Activated CD4-positive, alpha-beta memory T cell treated with anti-CD3 and anti-CD28 coated beads, Interleukin-2, amount 10 ng/mL, durations not matched to agents 7 days and 5 days (primary cell): ENCODE measurements at regions of chr1 and their contacts with region 1.

Region 1: DNA sequence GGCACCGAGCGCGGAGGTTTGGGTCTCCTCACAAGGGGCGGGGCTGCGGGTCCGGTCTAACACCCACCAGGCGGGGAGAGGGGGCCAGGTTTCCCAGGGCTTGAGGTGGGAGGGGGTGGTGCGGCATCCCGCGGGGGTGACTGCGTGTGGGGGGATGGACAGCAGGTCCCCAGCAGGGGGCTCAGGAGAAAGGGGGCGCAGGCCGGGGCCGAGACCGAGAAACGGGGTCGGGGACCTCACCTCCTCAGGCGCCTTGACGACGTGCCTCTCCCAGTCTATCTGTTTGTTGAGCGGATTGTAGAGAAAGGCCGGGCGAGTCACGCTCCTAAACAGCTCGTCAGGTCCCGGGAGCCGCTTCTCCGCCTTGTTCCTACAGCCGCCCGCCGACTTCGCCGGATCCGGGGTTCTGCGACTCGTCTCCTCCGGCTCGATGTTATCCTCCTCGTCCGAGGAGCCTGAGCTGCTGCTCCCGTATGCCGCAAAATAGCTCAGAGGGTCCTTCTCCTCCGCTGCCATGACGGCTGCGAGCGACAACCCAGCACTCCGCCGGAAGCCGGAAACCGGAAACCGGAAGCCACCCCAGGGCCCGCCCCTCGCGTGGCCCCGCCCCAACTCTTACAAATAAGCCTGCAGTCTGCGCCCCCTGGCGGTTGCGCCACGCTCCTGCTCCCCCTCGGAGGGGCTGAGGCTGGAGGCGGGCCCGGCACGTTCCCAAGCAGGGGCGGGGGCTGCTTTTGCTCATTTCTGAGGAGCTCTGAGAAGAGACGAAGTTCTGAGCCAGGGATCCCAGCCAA is at the start of gene C1orf52:
- DNase-seq: peak; percentile 95
- H3K4me3 Mint-ChIP-seq: peak within 1 kb of the TSS; percentile 90
- H3K27ac Mint-ChIP-seq: peak within 1 kb of the TSS; percentile 90
- H3K4me1 Mint-ChIP-seq: peaks cover 31% of the 10 kb centered on the region
- H3K27me3 Mint-ChIP-seq: no peaks in the 10 kb centered on the region
- total RNA-seq, gene C1orf52: 21.4 to 22.6 TPM

Region 2: DNA sequence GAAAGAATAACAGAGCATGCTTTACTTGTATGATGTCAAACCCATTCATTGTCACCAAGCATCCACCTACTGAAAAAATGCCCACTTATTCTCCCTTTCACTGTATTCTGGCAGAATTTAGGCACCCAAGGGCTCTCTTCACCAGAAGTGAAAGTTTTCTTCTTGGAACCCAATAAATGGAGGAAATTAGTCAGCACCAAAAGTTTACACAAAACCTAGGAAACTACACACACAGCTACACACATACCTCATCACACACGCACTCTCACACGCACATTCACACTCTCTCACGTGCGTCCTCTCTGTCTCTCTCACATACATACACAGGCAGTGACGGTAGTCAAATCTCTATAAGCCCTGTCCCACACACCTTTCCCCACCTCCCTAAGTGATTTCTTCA is 300.0 kb before region 1 on chr1:
- CTCF ChIA-PET with region 1: interaction called, 15 read pairs
- POLR2A ChIA-PET with region 1: no interaction called
- DNase-seq: peak; percentile 59
- H3K4me3 Mint-ChIP-seq: no peak overlapping the region
- H3K27ac Mint-ChIP-seq: no peak overlapping the region
- H3K4me1 Mint-ChIP-seq: peaks cover 23% of the 10 kb centered on the region
- H3K27me3 Mint-ChIP-seq: peaks cover 5% of the 10 kb centered on the region

Region 3: DNA sequence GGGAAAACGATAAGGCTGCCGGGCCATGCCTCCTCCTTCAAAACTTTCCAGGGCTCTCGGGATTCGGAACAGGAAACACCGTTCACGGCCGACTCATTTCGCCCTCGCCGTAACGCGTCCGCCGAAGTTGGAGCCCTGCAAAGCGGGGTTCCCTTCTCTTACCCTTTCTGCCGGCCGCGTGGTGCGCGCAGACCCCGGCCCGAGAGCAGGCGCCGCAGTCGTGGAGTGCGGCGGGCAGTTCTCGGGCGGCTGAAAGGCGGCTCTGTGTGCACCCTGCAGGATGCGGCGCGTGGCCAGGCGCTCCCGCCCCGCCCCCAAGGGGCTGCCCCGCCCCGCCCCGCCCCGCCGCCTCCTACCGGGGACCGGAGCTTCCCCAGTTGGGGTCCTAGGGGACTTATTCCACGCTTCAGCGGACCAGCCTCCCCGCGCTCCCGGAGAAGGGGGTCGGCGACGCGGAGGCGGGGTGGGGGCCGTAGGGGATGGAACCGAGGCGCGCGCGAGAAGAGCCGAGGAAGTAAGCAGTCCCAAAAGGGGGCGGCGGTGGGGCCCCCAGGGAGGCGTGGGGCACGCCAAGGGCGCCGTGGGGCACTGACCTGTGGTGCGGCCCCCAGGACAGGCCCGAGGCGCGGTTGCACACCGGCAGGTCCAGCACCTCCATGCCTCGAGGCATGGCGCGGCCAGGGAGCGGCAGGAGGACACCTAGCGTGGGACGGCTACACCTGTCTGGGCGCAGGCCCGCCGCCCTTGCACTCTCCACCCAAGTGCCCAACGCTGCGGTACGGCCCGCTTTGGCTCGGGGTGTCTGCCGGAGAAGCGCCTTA is 262.3 kb before region 1 on chr1 and contains the start of gene MCOLN2:
- CTCF ChIA-PET with region 1: interaction called, 19 read pairs
- POLR2A ChIA-PET with region 1: interaction called, 3 read pairs
- DNase-seq: peak; percentile 66
- H3K4me3 Mint-ChIP-seq: peak within 1 kb of the TSS; percentile 79
- H3K27ac Mint-ChIP-seq: peak within 1 kb of the TSS; percentile 76
- H3K4me1 Mint-ChIP-seq: peaks cover 50% of the 10 kb centered on the region
- H3K27me3 Mint-ChIP-seq: peaks cover 25% of the 10 kb centered on the region
- total RNA-seq, gene MCOLN2: 27.2 to 28.2 TPM

Region 4: DNA sequence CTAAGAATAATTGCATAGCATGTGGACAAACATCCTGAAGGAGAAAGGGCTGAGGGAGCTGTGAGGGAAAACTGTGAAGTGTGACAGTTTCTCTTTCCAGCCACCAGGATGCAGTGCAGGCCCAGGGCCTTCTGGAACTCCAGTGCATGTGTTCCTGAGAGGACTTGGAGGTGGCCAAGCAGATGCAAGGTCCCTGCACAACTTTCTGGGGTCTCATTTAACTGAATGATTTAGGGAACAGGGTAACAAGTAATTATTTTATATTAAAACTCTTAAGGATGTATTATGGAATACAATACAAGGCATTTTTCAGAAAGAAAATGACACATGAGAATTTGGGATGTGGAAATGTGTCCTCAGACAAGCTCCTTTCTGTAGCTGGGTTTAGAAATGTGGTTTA is 149.8 kb before region 1 on chr1:
- CTCF ChIA-PET with region 1: interaction called, 37 read pairs
- POLR2A ChIA-PET with region 1: no interaction called
- DNase-seq: peak; percentile 31
- H3K4me3 Mint-ChIP-seq: no peak overlapping the region
- H3K27ac Mint-ChIP-seq: no peak overlapping the region
- H3K4me1 Mint-ChIP-seq: no peaks in the 10 kb centered on the region
- H3K27me3 Mint-ChIP-seq: peaks cover 11% of the 10 kb centered on the region

Region 5: GRCh38 chr1:85276215-85276977 is 17.1 kb after region 1 on chr1 and contains the start of gene BCL10:
- CTCF ChIA-PET with region 1: interaction called, 202 read pairs
- POLR2A ChIA-PET with region 1: interaction called, 127 read pairs
- DNase-seq: peak; percentile 99
- H3K4me3 Mint-ChIP-seq: peak within 1 kb of the TSS; percentile 80
- H3K27ac Mint-ChIP-seq: peak within 1 kb of the TSS; percentile 80
- H3K4me1 Mint-ChIP-seq: peaks cover 53% of the 10 kb centered on the region
- H3K27me3 Mint-ChIP-seq: peaks cover 26% of the 10 kb centered on the region
- total RNA-seq, gene BCL10: 24.3 to 30.1 TPM